Naive thymus-derived CD4-positive, alpha-beta T cell (primary cell): ENCODE measurements at regions of chr17 and their contacts with region 1.

Region 1: DNA sequence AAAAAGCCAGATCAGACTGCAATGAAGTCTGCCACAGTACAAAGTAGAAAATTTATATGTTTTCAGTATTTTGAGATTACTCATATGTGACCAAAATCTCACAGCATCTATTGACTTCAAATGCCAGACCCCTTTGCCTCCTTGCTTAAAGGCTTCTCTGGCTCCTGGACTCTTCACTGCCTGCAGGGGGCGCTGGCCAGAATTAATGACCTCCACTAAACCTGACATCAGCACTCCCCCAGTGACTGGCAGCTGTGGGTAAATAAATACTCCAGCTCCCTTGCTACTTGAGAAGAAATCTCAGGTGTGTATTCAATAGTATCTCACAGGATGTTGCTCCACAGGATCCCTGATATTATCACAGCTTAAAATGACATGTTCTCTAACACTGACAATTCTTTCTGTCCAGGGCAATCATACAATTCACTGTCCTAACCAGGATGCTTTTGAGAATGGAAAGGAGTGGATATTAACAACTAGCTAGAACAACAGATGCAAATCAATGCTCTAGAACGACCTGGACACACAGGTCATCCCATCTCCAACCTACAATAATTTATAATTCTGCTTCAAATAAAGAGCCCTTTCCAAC is 4.0 kb downstream of the BECN1 start:
- DNase-seq: peak; percentile 16 to 57 (median 34)
- ATAC-seq: no peak
- H3K4me3 ChIP-seq: no peak overlapping the region
- H3K4me3 Mint-ChIP-seq: peak overlapping the region in 2 of 10 donors; percentile 1 to 22
- H3K27ac ChIP-seq: peak overlapping the region; percentile 40
- H3K27ac Mint-ChIP-seq: peak overlapping the region in 4 of 9 donors; percentile 6 to 43 (median 27)
- H3K4me1 ChIP-seq: peaks cover 6 to 12% of the 10 kb centered on the region in 2 donors
- H3K4me1 Mint-ChIP-seq: peaks cover 19 to 42% (median 28%) of the 10 kb centered on the region in 7 donors
- H3K27me3 ChIP-seq: no peaks in the 10 kb centered on the region
- H3K27me3 Mint-ChIP-seq: no peaks in the 10 kb centered on the region

Region 2: DNA sequence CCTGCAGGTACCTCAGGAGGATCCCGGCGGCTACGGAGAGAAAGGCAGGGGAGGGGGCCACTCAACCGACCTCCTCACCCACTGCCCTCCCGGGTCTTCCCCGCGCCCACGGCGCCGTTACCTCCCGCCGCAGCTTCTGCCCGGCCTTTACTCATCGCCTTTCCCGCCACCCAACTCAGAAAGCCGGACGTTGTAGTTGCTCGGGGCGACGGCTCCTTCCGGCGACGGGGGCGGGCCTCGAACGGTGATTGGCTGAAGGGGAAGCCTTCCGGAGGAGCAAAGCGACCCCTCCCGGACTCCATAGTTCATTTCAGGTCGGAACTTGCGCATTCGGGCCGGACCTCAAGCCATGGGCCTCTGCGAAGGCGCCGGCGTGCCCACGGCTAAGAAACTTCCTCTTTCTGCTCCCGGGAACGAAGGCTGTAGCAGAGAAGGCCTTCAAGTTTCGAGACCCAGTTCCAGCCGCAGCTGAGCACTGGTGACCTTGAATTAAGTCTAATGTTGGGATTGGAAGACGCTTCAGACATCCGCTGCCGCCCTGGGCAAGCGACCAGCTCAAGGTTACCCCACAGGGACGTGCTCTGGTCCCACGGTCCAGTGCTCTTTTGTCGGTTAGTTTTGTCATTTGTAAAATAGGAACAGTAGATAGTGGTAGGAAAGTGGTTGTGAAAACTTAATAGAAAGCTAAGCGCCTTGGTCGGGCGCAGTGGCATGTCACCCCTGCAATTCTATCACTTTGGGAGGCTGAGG is 242.3 kb before region 1 on chr17 and contains the start of gene PSMC3IP:
- CTCF ChIA-PET with region 1: no interaction called
- POLR2A ChIA-PET with region 1: no interaction called
- intact Hi-C with region 1: loop called in 1 of 2 experiments (anchors 1 kb)
- DNase-seq: peak; percentile 74 to 95 (median 85)
- ATAC-seq: peak; percentile 98
- H3K4me3 ChIP-seq: peak within 1 kb of the TSS; percentile 96
- H3K4me3 Mint-ChIP-seq: peak within 1 kb of the TSS; percentile 86 to 100 (median 96)
- H3K27ac ChIP-seq: peak within 1 kb of the TSS; percentile 87
- H3K27ac Mint-ChIP-seq: peak within 1 kb of the TSS; percentile 86 to 99 (median 96)
- H3K4me1 ChIP-seq: peaks cover 9 to 12% of the 10 kb centered on the region in 2 donors
- H3K4me1 Mint-ChIP-seq: peaks cover 17 to 53% (median 40%) of the 10 kb centered on the region in 7 donors
- H3K27me3 ChIP-seq: no peaks in the 10 kb centered on the region
- H3K27me3 Mint-ChIP-seq: no peaks in the 10 kb centered on the region
- total RNA-seq, gene PSMC3IP: 2.7 to 14.0 (median 5.2) TPM

Region 3: DNA sequence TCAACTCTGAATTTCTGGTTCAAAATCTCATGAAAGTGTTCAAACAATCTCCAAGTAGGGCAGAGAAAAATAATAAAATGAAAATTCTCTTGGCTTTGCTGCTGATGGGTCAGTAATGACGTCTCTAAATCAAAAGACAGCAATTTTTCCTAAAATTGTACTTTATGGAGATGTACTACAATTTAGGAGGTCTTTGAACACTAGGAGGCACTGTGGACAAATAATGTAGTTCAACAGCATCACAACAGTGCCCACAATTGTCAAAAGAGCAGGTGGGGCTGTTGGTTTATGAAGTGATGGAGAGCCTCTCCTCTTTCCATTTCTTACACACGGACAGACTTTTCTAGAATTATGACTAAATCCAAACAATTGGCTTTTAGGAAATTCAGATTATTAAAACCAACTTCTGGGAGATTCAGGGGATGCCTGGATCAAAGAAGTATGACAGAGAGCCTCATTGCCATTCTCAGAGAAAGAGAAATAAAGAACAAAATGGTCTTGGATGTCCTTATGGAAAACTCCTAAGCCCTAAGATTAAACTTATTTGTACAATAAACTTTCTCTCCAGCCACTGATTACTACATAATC is 99.0 kb before region 1 on chr17:
- CTCF ChIA-PET with region 1: no interaction called
- POLR2A ChIA-PET with region 1: no interaction called
- intact Hi-C with region 1: loop called (anchors 1 to 10 kb)
- DNase-seq: peak in 7 of 9 donors; percentile 43 to 74 (median 62)
- ATAC-seq: peak; percentile 87
- H3K4me3 ChIP-seq: no peak overlapping the region
- H3K4me3 Mint-ChIP-seq: no peak overlapping the region
- H3K27ac ChIP-seq: no peak overlapping the region
- H3K27ac Mint-ChIP-seq: no peak overlapping the region
- H3K4me1 ChIP-seq: no peaks in the 10 kb centered on the region
- H3K4me1 Mint-ChIP-seq: peaks cover 0 to 5% (median 4%) of the 10 kb centered on the region in 7 donors
- H3K27me3 ChIP-seq: no peaks in the 10 kb centered on the region
- H3K27me3 Mint-ChIP-seq: no peaks in the 10 kb centered on the region

Region 4: GRCh38 chr17:42798383-42799380 is 21.4 kb before region 1 on chr17 and contains the starts of genes CNTD1 and COA3:
- CTCF ChIA-PET with region 1: interaction called, 6 read pairs
- POLR2A ChIA-PET with region 1: interaction called, 12 read pairs
- intact Hi-C with region 1: loop called (anchors 1 kb)
- DNase-seq: peak; percentile 50 to 84 (median 58)
- ATAC-seq: peak; percentile 99
- H3K4me3 ChIP-seq: peak within 1 kb of the TSS; percentile 98
- H3K4me3 Mint-ChIP-seq: peak within 1 kb of the TSS; percentile 88 to 97 (median 94)
- H3K27ac ChIP-seq: peak within 1 kb of the TSS; percentile 76
- H3K27ac Mint-ChIP-seq: peak within 1 kb of the TSS; percentile 68 to 93 (median 82)
- H3K4me1 ChIP-seq: peaks cover 8 to 10% of the 10 kb centered on the region in 2 donors
- H3K4me1 Mint-ChIP-seq: peaks cover 22 to 34% (median 31%) of the 10 kb centered on the region in 7 donors
- H3K27me3 ChIP-seq: no peaks in the 10 kb centered on the region
- H3K27me3 Mint-ChIP-seq: peaks cover 0 to 19% (median 0%) of the 10 kb centered on the region in 5 donors
- total RNA-seq, gene CNTD1: not detected
- total RNA-seq, gene COA3: 7.6 to 48.1 (median 27.6) TPM

Region 5: GRCh38 chr17:42980398-42981397 is 160.7 kb after region 1 on chr17 and contains the start of gene RUNDC1:
- CTCF ChIA-PET with region 1: no interaction called
- POLR2A ChIA-PET with region 1: no interaction called
- intact Hi-C with region 1: loop called in 1 of 2 experiments (anchors 1 kb)
- DNase-seq: peak; percentile 81 to 93 (median 87)
- ATAC-seq: peak; percentile 93
- H3K4me3 ChIP-seq: peak within 1 kb of the TSS; percentile 81
- H3K4me3 Mint-ChIP-seq: peak within 1 kb of the TSS; percentile 96 to 99 (median 98)
- H3K27ac ChIP-seq: peak within 1 kb of the TSS; percentile 84
- H3K27ac Mint-ChIP-seq: peak within 1 kb of the TSS; percentile 83 to 98 (median 94)
- H3K4me1 ChIP-seq: peaks cover 4 to 16% of the 10 kb centered on the region in 2 donors
- H3K4me1 Mint-ChIP-seq: peaks cover 25 to 42% (median 38%) of the 10 kb centered on the region in 7 donors
- H3K27me3 ChIP-seq: no peaks in the 10 kb centered on the region
- H3K27me3 Mint-ChIP-seq: no peaks in the 10 kb centered on the region
- total RNA-seq, gene RUNDC1: 12.2 to 21.4 (median 19.4) TPM

Region 6: DNA sequence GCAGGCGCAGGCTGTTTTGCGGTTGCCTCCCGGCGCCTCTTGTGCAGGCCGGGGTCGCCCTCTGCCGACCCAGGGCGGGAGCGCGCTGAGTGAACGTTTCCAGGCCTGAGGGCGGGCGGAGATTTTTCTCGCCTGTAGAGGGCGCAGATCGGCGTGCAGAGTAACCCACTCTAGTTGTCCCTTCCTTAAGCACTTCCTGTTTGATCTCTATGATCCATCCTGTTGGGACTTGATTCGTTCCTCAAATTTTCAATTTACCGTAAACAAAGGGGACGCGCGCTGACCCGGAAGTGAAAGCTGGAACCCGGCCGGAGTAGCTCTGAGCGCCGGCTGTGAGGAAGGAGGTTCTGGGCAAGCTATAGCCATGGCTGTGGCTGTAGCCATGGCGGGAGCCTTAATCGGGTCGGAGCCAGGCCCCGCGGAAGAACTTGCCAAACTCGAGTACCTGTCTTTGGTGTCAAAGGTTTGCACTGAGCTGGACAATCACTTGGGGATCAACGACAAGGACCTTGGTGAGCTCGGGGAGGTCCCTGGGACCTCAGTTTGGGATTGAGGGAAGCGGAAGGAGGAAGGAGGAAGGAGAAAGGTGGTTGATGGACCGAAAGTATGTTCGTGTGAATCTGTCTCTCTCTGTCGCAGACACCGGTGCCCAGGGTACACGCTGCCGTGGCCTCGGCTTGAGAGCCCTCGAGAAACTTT is 663.8 kb after region 1 on chr17 and contains the start of gene DHX8:
- CTCF ChIA-PET with region 1: interaction called, 5 read pairs
- POLR2A ChIA-PET with region 1: no interaction called
- intact Hi-C with region 1: loop called (anchors 1 kb)
- DNase-seq: peak; percentile 96 to 100 (median 99)
- ATAC-seq: peak; percentile 99
- H3K4me3 ChIP-seq: peak within 1 kb of the TSS; percentile 90
- H3K4me3 Mint-ChIP-seq: peak within 1 kb of the TSS; percentile 98 to 100 (median 100)
- H3K27ac ChIP-seq: peak within 1 kb of the TSS; percentile 87
- H3K27ac Mint-ChIP-seq: peak within 1 kb of the TSS; percentile 91 to 100 (median 98)
- H3K4me1 ChIP-seq: peaks cover 21 to 29% of the 10 kb centered on the region in 2 donors
- H3K4me1 Mint-ChIP-seq: peaks cover 19 to 52% (median 36%) of the 10 kb centered on the region in 7 donors
- H3K27me3 ChIP-seq: no peaks in the 10 kb centered on the region
- H3K27me3 Mint-ChIP-seq: no peaks in the 10 kb centered on the region
- total RNA-seq, gene DHX8: 67.7 to 93.4 (median 77.8) TPM